ENCODE measurements at regions of chr17 and their contacts with region 1.

Region 1: GRCh38 chr17:63434876-63435684 is 11.0 kb downstream of the CYB561 start:
- DNase-seq: peak; percentile 94
- H3K4me3 Mint-ChIP-seq: peak overlapping the region; percentile 13
- H3K27ac Mint-ChIP-seq: no peak overlapping the region
- H3K4me1 Mint-ChIP-seq: peaks cover 43% of the 10 kb centered on the region
- H3K27me3 Mint-ChIP-seq: no peaks in the 10 kb centered on the region
- CTCF ChIP-seq: peak; percentile 52

Region 2: DNA sequence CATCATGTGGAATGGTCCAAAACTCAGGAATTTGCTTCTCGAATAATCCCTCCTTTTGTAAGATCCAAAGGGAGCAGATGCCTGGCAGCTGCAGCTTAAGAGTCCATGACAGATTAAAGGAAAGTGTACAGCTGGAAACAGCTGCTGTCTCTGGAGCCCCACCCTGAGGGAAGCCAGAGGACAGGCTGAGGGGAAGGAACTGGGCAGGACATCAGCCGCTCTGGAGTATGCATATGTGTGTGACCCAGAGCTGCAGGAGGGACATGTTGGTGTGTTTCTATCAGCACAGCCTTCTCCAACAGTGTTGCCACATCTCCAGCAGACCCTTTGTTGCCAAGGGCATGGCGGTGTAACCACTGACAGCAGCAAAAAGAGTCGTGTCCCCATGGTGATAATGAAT is 35.2 kb before region 1 on chr17:
- CTCF ChIA-PET with region 1: no interaction called
- POLR2A ChIA-PET with region 1: no interaction called
- intact Hi-C with region 1: no loop called
- DNase-seq: no peak
- H3K4me3 Mint-ChIP-seq: no peak overlapping the region
- H3K27ac Mint-ChIP-seq: no peak overlapping the region
- H3K4me1 Mint-ChIP-seq: no peaks in the 10 kb centered on the region
- H3K27me3 Mint-ChIP-seq: no peaks in the 10 kb centered on the region
- CTCF ChIP-seq: no peak

Region 3: GRCh38 chr17:63453031-63453461 is 18.0 kb after region 1 on chr17:
- CTCF ChIA-PET with region 1: interaction called, 16 read pairs
- POLR2A ChIA-PET with region 1: interaction called, 5 read pairs
- intact Hi-C with region 1: no loop called
- DNase-seq: no peak
- H3K4me3 Mint-ChIP-seq: no peak overlapping the region
- H3K27ac Mint-ChIP-seq: no peak overlapping the region
- H3K4me1 Mint-ChIP-seq: peaks cover 5% of the 10 kb centered on the region
- H3K27me3 Mint-ChIP-seq: no peaks in the 10 kb centered on the region
- CTCF ChIP-seq: no peak

Measured in MCF 10A (cell line).